Activated CD4-positive, alpha-beta memory T cell treated with anti-CD3 and anti-CD28 coated beads, Interleukin-2, amount 10 ng/mL, durations not matched to agents 7 days and 5 days (primary cell): ENCODE measurements at regions of chr11 and their contacts with region 1.

Region 1: GRCh38 chr11:43837879-43838278 is 42.8 kb upstream of the ALKBH3 start:
- DNase-seq: no peak
- H3K4me3 Mint-ChIP-seq: no peak overlapping the region
- H3K27ac Mint-ChIP-seq: no peak overlapping the region
- H3K4me1 Mint-ChIP-seq: no peaks in the 10 kb centered on the region
- H3K27me3 Mint-ChIP-seq: no peaks in the 10 kb centered on the region

Region 2: DNA sequence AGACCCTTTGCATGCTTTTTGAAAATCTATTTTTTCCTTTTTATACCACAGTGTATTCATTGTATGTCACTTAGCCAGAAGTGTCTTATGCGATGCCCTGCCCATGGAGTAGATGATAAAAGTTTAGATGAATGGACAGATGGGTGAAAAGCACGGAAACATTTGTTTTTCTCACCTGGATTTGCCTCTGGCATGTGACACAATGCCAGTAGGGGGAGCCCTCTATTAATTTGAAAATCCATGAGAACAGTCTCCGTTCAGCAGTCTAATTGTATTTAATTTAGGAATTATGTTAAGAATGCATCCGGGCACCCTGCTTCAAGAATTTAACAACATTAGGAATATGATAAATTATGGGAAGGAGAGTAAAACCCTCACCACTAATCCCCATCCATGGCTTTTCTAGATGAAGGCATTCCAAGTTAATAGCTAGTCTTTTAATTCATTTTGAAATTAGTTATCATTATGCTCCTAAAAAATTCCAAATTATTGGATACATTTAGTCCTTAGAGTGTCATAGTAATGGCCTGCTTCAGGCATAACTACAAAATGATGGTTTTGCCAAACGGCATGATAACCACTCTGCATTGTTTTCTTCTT is 12.6 kb before region 1 on chr11:
- CTCF ChIA-PET with region 1: interaction called, 14 read pairs
- POLR2A ChIA-PET with region 1: no interaction called
- DNase-seq: no peak
- H3K4me3 Mint-ChIP-seq: no peak overlapping the region
- H3K27ac Mint-ChIP-seq: no peak overlapping the region
- H3K4me1 Mint-ChIP-seq: no peaks in the 10 kb centered on the region
- H3K27me3 Mint-ChIP-seq: no peaks in the 10 kb centered on the region

Region 3: GRCh38 chr11:43987384-43988039 is 149.6 kb after region 1 on chr11:
- CTCF ChIA-PET with region 1: no interaction called
- POLR2A ChIA-PET with region 1: no interaction called
- DNase-seq: no peak
- H3K4me3 Mint-ChIP-seq: no peak overlapping the region
- H3K27ac Mint-ChIP-seq: no peak overlapping the region
- H3K4me1 Mint-ChIP-seq: no peaks in the 10 kb centered on the region
- H3K27me3 Mint-ChIP-seq: peaks cover 7% of the 10 kb centered on the region